Lower lobe of right lung (tissue), 2 donors: ENCODE measurements at regions of chr22 and their contacts with region 1.

Region 1: GRCh38 chr22:23281406-23282088 is 101.2 kb downstream of the BCR start:
- DNase-seq: peak; percentile 87
- ATAC-seq: peak; percentile 70 to 84
- H3K4me3 ChIP-seq: no peak overlapping the region
- H3K27ac ChIP-seq: peak overlapping the region; percentile 78
- H3K4me1 ChIP-seq: peaks cover 45% of the 10 kb centered on the region
- H3K27me3 ChIP-seq: no peaks in the 10 kb centered on the region
- CTCF ChIP-seq: peak; percentile 95

Region 2: DNA sequence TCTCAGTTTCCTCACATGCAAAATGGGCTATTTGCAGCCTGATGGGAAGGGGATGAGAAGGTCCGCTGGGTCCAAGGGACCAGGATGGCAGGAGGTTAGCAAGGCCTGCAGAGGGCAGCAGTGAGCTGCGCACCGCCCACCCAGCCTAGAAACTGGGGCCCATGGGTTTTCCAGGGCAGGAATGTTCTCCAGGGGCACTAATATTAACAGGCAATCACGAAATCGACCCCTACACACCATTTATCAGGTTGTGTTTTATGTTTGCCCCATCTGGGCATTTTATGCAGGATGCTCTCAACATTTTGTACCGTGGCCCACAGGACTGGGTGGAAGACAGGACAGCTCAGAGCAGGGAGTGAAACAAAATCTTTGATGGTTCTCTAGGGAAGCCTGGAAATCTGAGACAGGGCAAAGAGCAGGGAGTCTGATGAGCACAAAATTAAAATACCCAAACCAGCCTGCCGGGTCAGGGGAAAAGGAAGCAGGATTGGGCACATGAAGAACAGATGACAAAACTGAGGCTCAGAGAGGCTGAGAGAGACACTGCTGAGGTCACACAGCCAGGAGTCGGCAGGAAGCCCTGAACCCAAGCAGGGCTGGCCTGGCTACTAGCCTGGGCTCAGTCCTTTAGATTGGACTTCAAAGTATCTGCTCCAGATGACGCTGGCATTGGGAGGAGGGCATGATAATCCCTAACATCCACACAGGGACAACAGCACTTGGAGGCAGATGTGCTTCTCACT is 102.9 kb before region 1 on chr22:
- intact Hi-C with region 1: loop called (anchors 10 kb)
- DNase-seq: peak; percentile 75
- ATAC-seq: peak; percentile 64 to 73
- H3K4me3 ChIP-seq: no peak overlapping the region
- H3K27ac ChIP-seq: no peak overlapping the region
- H3K4me1 ChIP-seq: peaks cover 41% of the 10 kb centered on the region
- H3K27me3 ChIP-seq: no peaks in the 10 kb centered on the region
- CTCF ChIP-seq: peak; percentile 96

Region 3: DNA sequence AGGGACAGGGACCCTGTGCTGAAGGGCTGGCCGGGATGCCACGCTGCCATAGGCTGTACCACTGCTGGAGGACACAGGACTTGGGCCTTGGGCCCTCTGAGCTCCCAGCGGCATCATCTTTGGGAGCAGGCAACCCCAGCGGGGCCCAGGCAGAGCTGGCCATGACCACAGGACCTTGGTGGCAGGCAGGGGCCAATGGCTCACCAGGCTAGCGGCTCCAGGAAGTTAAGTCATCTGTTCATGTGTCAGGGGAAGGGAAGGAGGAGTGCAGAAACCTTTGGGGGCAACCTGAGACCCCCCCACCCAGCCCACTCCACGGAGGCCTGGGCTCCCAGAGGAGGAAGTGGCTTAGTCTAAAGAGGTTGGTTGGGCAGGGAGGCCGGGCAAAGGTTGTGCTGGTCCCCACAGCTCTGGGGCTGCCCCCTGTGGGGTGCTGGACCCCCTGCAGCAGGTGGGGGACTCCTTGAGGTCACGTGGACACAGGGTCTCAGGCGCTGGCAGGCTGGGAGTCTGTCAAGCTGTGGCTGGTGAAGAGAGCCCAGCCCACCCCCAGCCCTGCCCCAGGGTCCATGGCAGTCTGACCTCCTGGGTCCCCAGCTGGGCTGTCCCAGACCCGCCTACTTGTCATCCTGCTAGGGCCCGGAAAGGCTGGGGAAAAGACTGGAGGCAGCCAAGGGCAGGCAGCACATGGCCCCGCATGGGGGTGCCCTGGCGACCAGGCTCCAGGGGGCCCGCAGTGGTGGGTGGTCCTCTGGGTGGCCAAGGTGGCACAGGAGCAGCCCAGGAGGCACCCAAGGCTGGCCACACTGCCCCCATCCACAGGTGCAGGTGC is 114.2 kb after region 1 on chr22:
- intact Hi-C with region 1: no loop called
- DNase-seq: peak; percentile 34
- ATAC-seq: no peak
- H3K4me3 ChIP-seq: no peak overlapping the region
- H3K27ac ChIP-seq: no peak overlapping the region
- H3K4me1 ChIP-seq: no peaks in the 10 kb centered on the region
- H3K27me3 ChIP-seq: no peaks in the 10 kb centered on the region
- CTCF ChIP-seq: no peak

Region 4: DNA sequence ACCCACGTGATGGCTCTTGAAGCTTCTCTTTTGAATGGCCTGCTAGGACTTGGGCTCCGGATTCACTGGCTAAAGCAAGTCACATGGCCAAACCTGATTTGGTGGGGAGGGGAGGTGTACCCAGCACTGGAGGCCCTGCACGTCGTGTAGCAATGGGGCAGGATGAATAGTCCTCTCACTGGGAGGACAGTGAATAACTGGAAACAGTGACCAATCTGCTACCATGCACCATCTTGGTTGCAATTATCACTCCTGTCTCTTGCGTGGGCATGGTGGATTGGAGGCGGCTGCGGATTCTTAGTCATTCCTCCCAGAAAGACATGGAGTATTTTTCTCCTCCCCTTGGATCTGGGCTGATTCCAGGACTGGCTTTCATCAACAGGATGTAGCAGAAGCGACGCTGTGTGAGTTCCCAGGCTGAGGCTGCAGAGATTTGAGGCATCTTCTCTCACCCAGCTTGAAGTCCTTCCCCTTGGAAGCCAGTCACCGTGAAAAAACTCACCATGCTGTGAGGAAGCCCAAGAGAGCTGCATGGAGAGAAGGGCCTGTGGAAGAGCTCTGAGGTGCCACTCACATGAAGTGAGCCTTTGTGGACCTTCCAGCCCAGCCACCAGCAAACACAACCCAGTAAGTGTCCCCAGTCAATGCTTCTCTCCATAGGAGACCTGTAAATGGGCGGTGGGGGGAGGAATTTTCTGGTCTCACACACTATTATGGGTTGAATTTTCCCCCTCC is 228.2 kb after region 1 on chr22:
- intact Hi-C with region 1: no loop called
- DNase-seq: no peak
- ATAC-seq: no peak
- H3K4me3 ChIP-seq: no peak overlapping the region
- H3K27ac ChIP-seq: no peak overlapping the region
- H3K4me1 ChIP-seq: no peaks in the 10 kb centered on the region
- H3K27me3 ChIP-seq: no peaks in the 10 kb centered on the region
- CTCF ChIP-seq: no peak